ENCODE measurements at regions of chr1 and their contacts with region 1.

Region 1: DNA sequence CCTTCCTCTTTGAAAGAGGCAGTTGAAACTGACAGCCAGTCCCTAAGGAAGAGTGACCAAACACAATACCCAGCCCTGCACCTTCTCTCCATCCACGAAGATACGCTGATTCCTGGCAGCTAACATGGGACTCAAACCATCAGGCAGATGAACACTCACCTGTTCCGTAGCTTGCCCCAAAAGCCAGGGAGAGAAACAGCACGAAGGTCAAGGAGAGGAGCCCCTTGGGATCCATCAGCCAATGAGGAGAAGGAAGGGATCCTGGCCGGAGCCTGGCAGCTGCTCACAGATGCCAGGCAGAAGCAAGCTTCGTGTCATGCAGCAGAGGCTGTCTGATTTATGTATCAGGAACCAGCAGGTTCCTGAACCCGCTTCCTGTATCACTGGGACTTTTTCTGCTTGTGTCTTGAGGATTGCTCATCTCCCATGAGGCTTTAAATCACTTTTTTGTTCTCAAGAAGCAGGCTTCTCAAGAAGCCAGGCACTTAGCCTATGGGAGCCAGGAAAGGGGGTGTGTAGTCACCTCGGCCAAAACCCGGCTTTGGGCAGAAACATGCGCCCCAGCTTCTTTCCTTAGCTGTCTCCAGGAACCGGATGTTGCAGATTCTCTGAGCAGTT is at the start of gene SLAMF1:
- DNase-seq: peak; percentile 35
- ATAC-seq: peak; percentile 84
- H3K4me3 Mint-ChIP-seq: peak within 1 kb of the TSS; percentile 95
- H3K27ac Mint-ChIP-seq: peak within 1 kb of the TSS; percentile 91
- H3K4me1 Mint-ChIP-seq: peaks cover 88% of the 10 kb centered on the region
- H3K27me3 Mint-ChIP-seq: no peaks in the 10 kb centered on the region
- CTCF ChIP-seq: no peak
- total RNA-seq, gene SLAMF1: 85.7 and 91.7 TPM in 2 replicates

Region 2: DNA sequence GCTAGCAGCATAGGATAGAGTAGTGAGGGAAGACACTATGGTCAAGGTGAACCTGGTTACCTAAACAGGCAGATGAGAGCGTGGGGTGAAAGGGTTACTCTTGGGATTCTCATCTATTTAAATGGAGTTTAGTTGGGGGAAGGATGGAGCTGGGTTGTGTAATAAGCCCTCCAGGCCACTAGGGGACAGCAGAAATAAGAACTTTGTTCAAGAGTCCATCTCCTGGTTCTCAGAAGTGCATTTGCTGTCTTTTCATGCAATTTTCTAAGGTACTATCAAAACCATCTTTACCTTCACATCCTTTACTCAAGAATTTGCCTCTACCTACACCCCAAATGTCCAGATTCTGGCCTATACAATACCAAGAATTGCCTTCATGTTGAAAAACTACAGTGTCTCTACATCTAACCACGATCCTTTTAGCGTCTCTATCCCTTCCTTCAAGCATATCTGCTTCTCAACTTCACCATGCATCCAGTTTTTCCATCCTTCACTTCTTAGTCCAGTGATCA is 28.0 kb before region 1 on chr1:
- CTCF ChIA-PET with region 1: interaction called, 10 read pairs
- POLR2A ChIA-PET with region 1: interaction called, 15 read pairs
- intact Hi-C with region 1: no loop called
- DNase-seq: no peak
- ATAC-seq: no peak
- H3K4me3 Mint-ChIP-seq: no peak overlapping the region
- H3K27ac Mint-ChIP-seq: peak overlapping the region; percentile 5
- H3K4me1 Mint-ChIP-seq: peaks cover 58% of the 10 kb centered on the region
- H3K27me3 Mint-ChIP-seq: no peaks in the 10 kb centered on the region
- CTCF ChIP-seq: no peak

Region 3: GRCh38 chr1:160629286-160630210 is 17.3 kb before region 1 on chr1:
- CTCF ChIA-PET with region 1: interaction called, 4 read pairs
- POLR2A ChIA-PET with region 1: interaction called, 17 read pairs
- intact Hi-C with region 1: loop called (anchors 2 kb)
- DNase-seq: no peak
- ATAC-seq: peak; percentile 33
- H3K4me3 Mint-ChIP-seq: peak overlapping the region; percentile 41
- H3K27ac Mint-ChIP-seq: peak overlapping the region; percentile 74
- H3K4me1 Mint-ChIP-seq: peaks cover 96% of the 10 kb centered on the region
- H3K27me3 Mint-ChIP-seq: no peaks in the 10 kb centered on the region
- CTCF ChIP-seq: no peak